Activated naive CD4-positive, alpha-beta T cell treated with anti-CD3 and anti-CD28 coated beads for 36 hours (primary cell): ENCODE measurements at regions of chr3 and their contacts with region 1.

Region 1: GRCh38 chr3:13895155-13896105 is 15.6 kb upstream of the WNT7A start:
- DNase-seq: peak; percentile 98
- H3K4me3 Mint-ChIP-seq: peak overlapping the region; percentile 79
- H3K27ac Mint-ChIP-seq: peak overlapping the region; percentile 61
- H3K4me1 Mint-ChIP-seq: peaks cover 23% of the 10 kb centered on the region
- H3K27me3 Mint-ChIP-seq: no peaks in the 10 kb centered on the region

Region 2: GRCh38 chr3:13141991-13142412 is 753.4 kb before region 1 on chr3:
- CTCF ChIA-PET with region 1: no interaction called
- intact Hi-C with region 1: no loop called
- DNase-seq: peak; percentile 58
- H3K4me3 Mint-ChIP-seq: no peak overlapping the region
- H3K27ac Mint-ChIP-seq: no peak overlapping the region
- H3K4me1 Mint-ChIP-seq: no peaks in the 10 kb centered on the region
- H3K27me3 Mint-ChIP-seq: no peaks in the 10 kb centered on the region

Region 3: DNA sequence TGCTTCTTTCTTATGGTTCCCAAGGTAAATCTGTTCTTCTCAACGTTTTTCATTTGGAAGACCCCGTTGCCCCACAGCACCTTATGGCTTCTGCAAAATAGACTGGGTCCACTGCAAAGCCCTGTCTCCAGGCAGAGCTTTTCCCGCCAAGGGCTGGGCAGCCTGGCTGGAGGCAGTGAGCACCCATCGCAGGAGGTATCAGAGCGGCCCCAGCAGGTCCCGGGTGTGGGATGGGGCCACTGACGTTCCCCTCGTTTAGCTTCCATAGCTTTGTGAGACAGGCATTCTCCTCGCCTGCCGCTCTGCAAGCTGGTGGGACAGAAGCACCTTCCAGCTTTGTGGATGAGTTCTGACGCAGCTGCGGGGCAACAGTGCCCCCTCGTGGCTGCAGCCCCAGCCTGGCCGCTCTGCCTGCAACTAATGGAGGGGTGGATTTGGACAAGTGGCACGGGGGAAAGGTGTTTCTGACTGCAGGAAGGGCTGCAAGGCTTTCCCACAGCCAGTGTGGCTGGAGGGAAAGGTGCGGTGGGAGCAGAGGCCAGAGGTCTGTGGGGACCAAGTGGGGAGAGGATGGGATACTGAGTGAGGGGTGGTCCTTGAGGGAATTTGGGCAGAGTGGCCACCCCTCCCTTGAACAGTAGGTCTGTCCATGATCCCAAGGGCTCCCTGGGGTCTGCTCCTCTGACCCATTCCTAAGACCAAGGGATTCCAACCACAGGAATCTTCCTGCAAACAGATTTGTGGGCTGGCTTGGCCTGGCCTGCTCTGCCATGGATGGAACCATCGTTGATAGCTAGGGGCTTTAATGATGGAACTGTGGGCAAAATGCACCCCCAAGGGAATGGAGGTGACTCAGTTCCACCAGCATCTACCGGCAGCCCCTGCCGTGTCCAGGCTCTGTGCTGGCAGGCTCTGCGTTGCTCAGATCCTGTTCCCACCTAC is 247.1 kb before region 1 on chr3:
- CTCF ChIA-PET with region 1: interaction called, 459 read pairs
- intact Hi-C with region 1: no loop called
- DNase-seq: peak; percentile 82
- H3K4me3 Mint-ChIP-seq: no peak overlapping the region
- H3K27ac Mint-ChIP-seq: no peak overlapping the region
- H3K4me1 Mint-ChIP-seq: peaks cover 18% of the 10 kb centered on the region
- H3K27me3 Mint-ChIP-seq: peaks cover 14% of the 10 kb centered on the region

Region 4: GRCh38 chr3:14124615-14125190 is 229.3 kb after region 1 on chr3 and contains the starts of genes CHCHD4 and TMEM43:
- CTCF ChIA-PET with region 1: interaction called, 25 read pairs
- intact Hi-C with region 1: loop called (anchors 1 kb)
- DNase-seq: peak; percentile 99
- H3K4me3 Mint-ChIP-seq: peak within 1 kb of the TSS; percentile 93
- H3K27ac Mint-ChIP-seq: peak within 1 kb of the TSS; percentile 92
- H3K4me1 Mint-ChIP-seq: peaks cover 50% of the 10 kb centered on the region
- H3K27me3 Mint-ChIP-seq: no peaks in the 10 kb centered on the region
- total RNA-seq, gene CHCHD4: 16.2 to 17.9 TPM
- total RNA-seq, gene TMEM43: 18.3 to 19.8 TPM

Region 5: GRCh38 chr3:14203521-14204079 is 308.2 kb after region 1 on chr3:
- CTCF ChIA-PET with region 1: interaction called, 25 read pairs
- intact Hi-C with region 1: loop called (anchors 1 kb)
- DNase-seq: peak; percentile 64
- H3K4me3 Mint-ChIP-seq: no peak overlapping the region
- H3K27ac Mint-ChIP-seq: no peak overlapping the region
- H3K4me1 Mint-ChIP-seq: peaks cover 2% of the 10 kb centered on the region
- H3K27me3 Mint-ChIP-seq: no peaks in the 10 kb centered on the region

Region 6: GRCh38 chr3:14461748-14462324 is 566.4 kb after region 1 on chr3:
- CTCF ChIA-PET with region 1: no interaction called
- intact Hi-C with region 1: loop called (anchors 1 kb)
- DNase-seq: peak; percentile 77
- H3K4me3 Mint-ChIP-seq: no peak overlapping the region
- H3K27ac Mint-ChIP-seq: peak overlapping the region; percentile 59
- H3K4me1 Mint-ChIP-seq: peaks cover 36% of the 10 kb centered on the region
- H3K27me3 Mint-ChIP-seq: no peaks in the 10 kb centered on the region